ENCODE measurements at regions of chr4 and their contacts with region 1.

Region 1: DNA sequence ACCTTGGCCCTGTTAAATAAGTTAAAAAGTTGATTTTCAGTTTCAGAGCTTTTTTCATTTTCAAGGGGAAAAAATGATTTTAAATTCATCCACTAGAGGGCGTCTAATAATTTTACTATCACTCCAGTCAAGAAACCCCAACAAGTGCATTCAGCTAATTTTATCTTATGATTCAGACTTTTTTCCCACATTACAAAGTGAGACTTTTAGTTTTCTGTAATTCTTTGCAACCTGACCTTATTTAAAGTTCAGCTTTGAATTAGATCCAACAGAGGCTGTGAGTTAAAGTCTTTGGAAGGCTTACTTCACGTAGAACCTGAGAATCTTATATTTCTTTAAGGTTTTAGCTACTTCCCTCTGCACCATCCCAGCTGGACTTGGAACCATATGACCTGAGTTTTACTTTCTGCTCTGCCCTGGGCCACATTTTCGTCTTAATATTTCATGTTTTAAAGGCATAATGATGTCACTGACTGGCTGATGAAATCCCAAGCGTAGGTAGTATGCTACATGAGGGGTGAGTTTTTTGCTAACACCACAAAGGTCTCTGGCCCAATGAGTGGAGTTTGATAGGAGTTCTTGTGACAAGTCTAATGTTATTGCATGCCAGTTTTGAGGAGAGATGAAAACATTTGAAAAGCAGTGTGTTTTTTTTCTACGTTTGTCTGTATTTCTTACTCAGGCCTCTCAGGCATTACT is 7.2 kb downstream of the GNRHR start:
- DNase-seq: no peak
- H3K4me3 ChIP-seq: no peak overlapping the region
- H3K27ac ChIP-seq: no peak overlapping the region
- H3K27me3 ChIP-seq: no peaks in the 10 kb centered on the region
- CTCF ChIP-seq: peak; percentile 53

Region 2: DNA sequence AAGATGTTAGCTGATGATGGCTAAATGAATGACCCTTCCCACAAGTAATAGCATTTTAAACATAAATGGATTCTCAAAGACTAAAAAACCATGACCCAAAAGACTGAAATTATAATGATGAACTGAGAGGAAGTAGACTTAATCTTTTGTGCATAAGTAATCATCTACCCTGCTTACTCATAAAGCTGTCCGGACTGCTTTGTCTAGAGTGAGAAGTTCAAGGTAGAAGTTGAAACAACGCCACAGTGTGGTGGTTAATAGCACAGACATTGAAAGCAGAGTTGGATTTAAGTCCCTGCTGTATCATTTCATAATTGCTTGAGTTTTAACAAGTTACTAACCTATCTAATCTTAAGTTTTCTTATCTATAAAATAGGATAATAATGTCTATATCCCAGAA is 548.2 kb before region 1 on chr4:
- CTCF ChIA-PET with region 1: no interaction called
- POLR2A ChIA-PET with region 1: no interaction called
- DNase-seq: no peak
- H3K4me3 ChIP-seq: no peak overlapping the region
- H3K27ac ChIP-seq: no peak overlapping the region
- H3K27me3 ChIP-seq: no peaks in the 10 kb centered on the region
- CTCF ChIP-seq: no peak

Region 3: DNA sequence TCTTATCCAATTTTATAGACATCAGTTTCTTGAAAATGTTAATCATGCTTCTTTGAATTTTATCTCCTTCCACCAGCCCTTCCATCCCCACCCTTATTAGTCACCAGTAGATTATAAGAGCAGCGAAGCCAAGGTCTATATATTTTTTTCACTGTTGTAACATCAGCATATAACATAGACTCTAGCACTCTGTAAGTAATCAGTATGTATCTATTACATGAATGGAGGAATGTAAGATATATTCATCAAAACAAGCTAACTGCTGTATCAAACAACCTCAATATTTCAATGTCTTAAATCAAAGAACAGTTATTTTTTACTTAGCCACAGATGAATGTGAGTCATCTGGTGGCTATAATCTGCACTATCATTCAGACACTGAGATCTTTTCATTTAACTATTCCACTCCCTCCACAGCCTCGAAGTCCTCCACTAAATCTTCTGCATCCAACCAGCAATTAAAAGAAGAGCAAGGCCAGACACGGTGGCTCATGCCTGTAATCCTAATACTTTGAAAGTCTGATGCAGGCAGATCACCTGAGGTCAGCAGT is 380.6 kb before region 1 on chr4:
- CTCF ChIA-PET with region 1: no interaction called
- POLR2A ChIA-PET with region 1: no interaction called
- DNase-seq: no peak
- H3K4me3 ChIP-seq: no peak overlapping the region
- H3K27ac ChIP-seq: no peak overlapping the region
- H3K27me3 ChIP-seq: no peaks in the 10 kb centered on the region
- CTCF ChIP-seq: no peak

Region 4: GRCh38 chr4:67712000-67712625 is 34.8 kb before region 1 on chr4:
- CTCF ChIA-PET with region 1: interaction called, 10 read pairs
- POLR2A ChIA-PET with region 1: no interaction called
- DNase-seq: no peak
- H3K4me3 ChIP-seq: no peak overlapping the region
- H3K27ac ChIP-seq: no peak overlapping the region
- H3K27me3 ChIP-seq: no peaks in the 10 kb centered on the region
- CTCF ChIP-seq: no peak

Region 5: DNA sequence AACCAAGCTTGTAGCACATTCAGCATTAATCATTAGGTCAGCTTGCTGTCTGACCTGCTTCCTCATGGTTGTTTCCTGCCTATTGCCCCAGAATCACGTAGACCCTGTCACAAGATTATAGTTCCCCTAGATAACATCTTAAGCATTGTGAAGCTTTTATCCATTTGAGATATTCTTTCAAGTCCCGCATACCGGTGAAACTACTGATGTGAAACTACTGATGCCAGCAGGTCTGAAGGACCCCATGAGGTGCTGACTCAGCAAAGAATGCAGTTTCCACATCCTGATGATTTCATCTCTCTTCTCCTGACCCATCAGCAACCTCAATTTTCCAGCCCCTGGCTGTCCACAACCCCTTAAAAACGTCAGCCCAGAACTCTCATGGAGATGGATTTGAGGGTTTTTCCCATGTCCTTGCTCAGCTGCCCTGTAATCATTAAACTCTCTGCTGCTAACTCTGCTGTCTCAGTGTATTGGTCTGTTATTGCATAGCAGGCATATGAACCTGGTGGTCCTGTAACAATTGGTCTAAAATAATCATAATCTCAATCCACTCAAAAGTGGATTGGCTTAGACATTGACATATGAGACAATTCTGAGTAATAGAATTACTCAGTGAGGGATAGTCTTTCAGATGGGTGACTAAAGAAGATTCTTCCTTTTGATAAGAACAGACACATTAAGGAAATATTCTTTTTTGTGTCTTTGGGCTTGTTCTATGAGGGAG is 19.7 kb before region 1 on chr4:
- CTCF ChIA-PET with region 1: interaction called, 28 read pairs
- POLR2A ChIA-PET with region 1: no interaction called
- DNase-seq: no peak
- H3K4me3 ChIP-seq: no peak overlapping the region
- H3K27ac ChIP-seq: no peak overlapping the region
- H3K27me3 ChIP-seq: no peaks in the 10 kb centered on the region
- CTCF ChIP-seq: no peak

Region 6: GRCh38 chr4:67762086-67762485 is 15.1 kb after region 1 on chr4:
- CTCF ChIA-PET with region 1: interaction called, 52 read pairs
- POLR2A ChIA-PET with region 1: no interaction called
- DNase-seq: no peak
- H3K4me3 ChIP-seq: no peak overlapping the region
- H3K27ac ChIP-seq: no peak overlapping the region
- H3K27me3 ChIP-seq: no peaks in the 10 kb centered on the region
- CTCF ChIP-seq: no peak

Region 7: GRCh38 chr4:67871867-67872266 is 124.9 kb after region 1 on chr4:
- CTCF ChIA-PET with region 1: interaction called, 10 read pairs
- POLR2A ChIA-PET with region 1: no interaction called
- DNase-seq: no peak
- H3K4me3 ChIP-seq: no peak overlapping the region
- H3K27ac ChIP-seq: no peak overlapping the region
- H3K27me3 ChIP-seq: no peaks in the 10 kb centered on the region
- CTCF ChIP-seq: peak; percentile 63

Region 8: GRCh38 chr4:68175562-68176155 is 428.7 kb after region 1 on chr4:
- CTCF ChIA-PET with region 1: interaction called, 30 read pairs
- POLR2A ChIA-PET with region 1: no interaction called
- DNase-seq: peak; percentile 20
- H3K4me3 ChIP-seq: no peak overlapping the region
- H3K27ac ChIP-seq: no peak overlapping the region
- H3K27me3 ChIP-seq: no peaks in the 10 kb centered on the region
- CTCF ChIP-seq: peak; percentile 77